IMR-90 (cell line): ENCODE measurements at regions of chr6 and their contacts with region 1.

Region 1: DNA sequence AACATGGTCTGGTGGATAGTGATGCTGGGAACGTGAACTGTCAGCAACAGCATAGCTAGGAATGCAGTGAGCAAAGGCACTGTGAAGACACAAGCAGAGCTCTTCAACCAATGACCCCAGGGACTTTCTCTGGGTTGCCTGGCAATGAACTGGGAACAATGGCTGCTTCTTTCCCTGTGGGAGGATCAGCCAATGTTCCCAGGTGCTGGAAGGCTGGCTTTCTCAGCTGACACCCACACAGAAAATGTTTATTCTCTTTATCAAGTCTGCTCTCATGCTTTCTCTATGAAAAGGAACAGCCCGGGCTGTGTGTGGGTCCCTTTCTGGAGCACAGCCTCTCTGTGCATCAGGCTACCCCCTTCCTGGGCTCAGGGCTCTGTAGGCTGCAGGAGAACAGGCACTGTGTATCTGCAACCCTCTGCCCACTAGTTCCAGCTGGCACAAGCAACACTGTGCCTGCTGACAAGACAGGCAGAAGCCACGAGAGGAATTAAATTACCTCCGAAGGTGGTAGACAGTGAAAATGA is 54.2 kb downstream of the HFE start:
- DNase-seq: no peak
- ATAC-seq: peak; percentile 60
- H3K4me3 ChIP-seq: no peak overlapping the region
- H3K27ac ChIP-seq: no peak overlapping the region
- H3K4me1 ChIP-seq: no peaks in the 10 kb centered on the region
- H3K27me3 ChIP-seq: no peaks in the 10 kb centered on the region
- CTCF ChIP-seq: no peak
- POLR2A ChIP-seq: no peak
- RAD21 ChIP-seq: no peak

Region 2: DNA sequence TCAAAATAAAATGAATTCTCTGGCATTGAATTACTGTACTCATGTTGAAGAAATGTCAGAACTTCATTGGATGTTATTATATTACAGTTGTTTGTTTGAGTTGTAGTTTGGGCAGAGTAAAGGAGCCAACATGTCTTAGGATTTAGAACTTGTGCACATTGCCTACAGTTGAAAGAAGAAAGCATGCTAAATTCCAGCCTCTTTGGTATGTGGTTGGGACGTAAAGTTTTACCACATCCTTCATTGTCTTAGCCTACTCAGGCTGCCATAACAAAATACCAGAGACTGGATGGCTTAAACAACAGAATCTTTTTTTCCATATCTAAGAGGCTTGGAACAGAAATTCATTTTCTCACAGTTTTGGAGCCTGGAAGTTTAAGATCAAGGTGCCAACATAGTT is 11.8 kb before region 1 on chr6:
- CTCF ChIA-PET with region 1: no interaction called
- POLR2A ChIA-PET with region 1: interaction called, 7 read pairs
- dilution Hi-C with region 1: no loop called
- in situ Hi-C with region 1: no loop called
- intact Hi-C with region 1: loop called (anchors 2 kb)
- DNase-seq: peak; percentile 52
- ATAC-seq: peak; percentile 35
- H3K4me3 ChIP-seq: no peak overlapping the region
- H3K27ac ChIP-seq: peak overlapping the region; percentile 88; the same call in 1 of the 2 replicates
- H3K4me1 ChIP-seq: peaks cover 4% of the 10 kb centered on the region
- H3K27me3 ChIP-seq: no peaks in the 10 kb centered on the region
- CTCF ChIP-seq: no peak
- POLR2A ChIP-seq: no peak
- RAD21 ChIP-seq: no peak